ENCODE measurements at regions of chr11 and their contacts with region 1.

Region 1: DNA sequence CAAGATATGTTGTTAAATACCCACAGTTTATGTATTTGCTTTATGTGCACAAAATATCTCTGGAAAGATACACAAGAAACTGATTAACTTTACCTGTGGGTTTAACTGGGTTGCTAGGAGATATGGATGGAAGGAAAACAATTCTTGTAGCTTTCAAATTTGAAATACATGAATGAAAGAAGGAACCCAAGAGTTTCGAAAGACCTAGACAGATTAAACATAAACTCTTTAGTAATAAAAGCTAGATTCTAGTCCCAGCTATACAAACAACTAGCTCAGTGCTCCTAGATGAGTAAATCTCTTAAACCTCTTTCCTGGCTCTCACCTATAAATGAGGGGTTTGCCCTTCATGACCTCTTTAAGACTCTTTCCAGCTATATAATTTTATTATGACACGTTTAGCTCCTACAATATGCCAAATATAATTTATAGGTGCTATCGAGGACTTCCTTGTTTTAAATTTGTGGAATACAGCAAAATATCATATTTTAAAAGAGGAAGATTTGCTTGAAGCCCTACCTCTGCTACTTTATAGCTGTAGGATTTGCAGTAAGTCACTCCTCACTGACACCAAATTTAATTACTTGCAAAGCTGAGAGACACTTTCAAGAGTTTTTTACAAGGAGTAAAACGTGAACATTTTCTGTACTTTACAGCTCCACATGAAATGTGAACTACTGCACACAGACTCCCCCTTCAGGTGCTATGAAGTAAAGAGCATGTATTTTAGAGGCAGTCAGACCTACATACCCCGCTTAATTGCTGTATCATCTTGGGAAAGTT is 50.7 kb downstream of the RRAS2 start:
- DNase-seq: no peak
- ATAC-seq: peak; percentile 76
- H3K4me3 Mint-ChIP-seq: no peak overlapping the region
- H3K27ac Mint-ChIP-seq: no peak overlapping the region
- H3K4me1 Mint-ChIP-seq: peaks cover 25% of the 10 kb centered on the region
- H3K27me3 Mint-ChIP-seq: no peaks in the 10 kb centered on the region

Region 2: DNA sequence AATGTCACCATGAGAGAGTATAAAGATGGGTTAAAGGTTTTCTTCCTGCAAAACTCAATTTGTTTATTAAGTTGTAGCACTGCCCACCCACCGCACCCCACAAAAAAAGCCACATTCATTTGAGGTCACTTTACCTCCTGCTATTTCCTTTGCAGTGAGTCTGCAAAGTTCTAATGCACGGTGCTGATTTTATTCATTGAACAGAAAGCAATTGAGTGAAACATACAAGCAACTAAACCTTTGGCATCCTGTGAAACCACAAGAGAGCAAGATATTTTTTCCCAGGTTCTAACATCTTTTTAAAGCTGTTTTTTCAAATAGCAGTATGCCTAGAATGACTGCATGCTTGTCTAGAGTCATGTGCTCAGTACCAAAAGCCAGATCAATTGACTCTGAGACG is 11.7 kb after region 1 on chr11:
- CTCF ChIA-PET with region 1: interaction called, 21 read pairs
- DNase-seq: peak; percentile 92
- ATAC-seq: peak; percentile 90
- H3K4me3 Mint-ChIP-seq: peak overlapping the region; percentile 41
- H3K27ac Mint-ChIP-seq: peak overlapping the region; percentile 83
- H3K4me1 Mint-ChIP-seq: peaks cover 69% of the 10 kb centered on the region
- H3K27me3 Mint-ChIP-seq: no peaks in the 10 kb centered on the region

Region 3: DNA sequence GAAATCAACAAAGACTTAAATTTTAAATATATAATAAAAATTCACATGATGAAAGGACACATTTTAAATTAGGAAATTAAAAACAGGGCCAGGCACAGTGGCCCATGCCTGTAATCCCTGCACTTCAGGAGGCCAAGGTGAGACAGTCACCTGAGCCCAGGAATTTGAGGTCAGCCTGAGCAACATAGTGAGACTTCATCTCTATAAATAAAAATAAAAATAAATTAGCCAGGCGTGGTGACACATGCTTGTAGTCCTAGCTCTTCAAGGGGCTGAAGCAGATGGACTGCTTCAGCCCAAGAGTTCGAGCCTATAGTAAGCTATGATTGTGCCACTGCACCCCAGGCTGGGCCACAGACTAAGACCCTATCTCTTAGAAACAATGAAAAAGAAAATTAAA is 21.4 kb after region 1 on chr11:
- CTCF ChIA-PET with region 1: interaction called, 10 read pairs
- DNase-seq: no peak
- ATAC-seq: no peak
- H3K4me3 Mint-ChIP-seq: no peak overlapping the region
- H3K27ac Mint-ChIP-seq: no peak overlapping the region
- H3K4me1 Mint-ChIP-seq: peaks cover 41% of the 10 kb centered on the region
- H3K27me3 Mint-ChIP-seq: no peaks in the 10 kb centered on the region

Region 4: GRCh38 chr11:14418803-14419417 is 110.6 kb after region 1 on chr11:
- CTCF ChIA-PET with region 1: interaction called, 17 read pairs
- DNase-seq: no peak
- ATAC-seq: no peak
- H3K4me3 Mint-ChIP-seq: no peak overlapping the region
- H3K27ac Mint-ChIP-seq: no peak overlapping the region
- H3K4me1 Mint-ChIP-seq: peaks cover 40% of the 10 kb centered on the region
- H3K27me3 Mint-ChIP-seq: no peaks in the 10 kb centered on the region